Activated T-helper 2 cell treated with anti-CD3 and anti-CD28 coated beads, Interferon-gamma antibody, Interleukin-2, Interleukin-4, amounts not matched to agents 10 μg/mL and 5 μg/mL and 100 μg/mL, durations not matched to agents 14 hours and 24 hours and 36 hours (primary cell): ENCODE measurements at regions of chr1 and their contacts with region 1.

Region 1: DNA sequence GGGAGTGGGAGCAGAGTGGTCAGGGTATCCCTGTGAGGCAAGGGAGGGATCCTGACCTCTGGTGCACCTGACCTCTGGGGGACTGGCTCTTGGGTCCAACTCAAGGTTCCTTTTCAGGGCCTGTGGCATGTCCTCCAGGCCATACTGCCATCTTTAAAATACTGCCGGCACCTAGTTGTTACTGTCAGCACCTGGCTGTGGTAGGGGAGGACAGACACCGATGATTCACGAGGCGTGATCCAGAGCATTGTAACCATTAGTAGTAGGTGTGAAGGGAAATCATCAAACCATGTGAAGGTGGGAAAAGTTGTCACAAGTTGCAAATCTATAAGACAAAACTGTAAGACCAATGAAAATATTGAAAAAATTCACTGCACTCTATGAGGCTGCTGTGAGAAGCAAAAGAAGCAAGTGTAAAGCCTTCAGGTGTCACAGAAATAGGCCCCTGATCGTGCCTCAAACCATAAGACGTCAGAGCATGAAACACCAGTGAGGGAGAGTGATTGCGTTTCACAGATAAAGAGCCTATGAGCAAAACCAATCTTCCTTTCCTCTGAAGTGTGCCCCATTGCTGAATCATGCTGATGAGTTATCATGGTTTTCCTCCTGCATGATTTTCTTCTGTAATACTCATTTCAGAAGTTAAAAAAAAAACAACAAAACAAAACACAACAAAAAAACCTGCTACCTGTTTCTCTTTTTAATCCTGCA is 55.3 kb downstream of the CDC7 start:
- DNase-seq: peak; percentile 77
- H3K4me3 Mint-ChIP-seq: peak overlapping the region; percentile 53
- H3K27ac Mint-ChIP-seq: peak overlapping the region; percentile 93
- H3K4me1 Mint-ChIP-seq: peaks cover 86% of the 10 kb centered on the region
- H3K27me3 Mint-ChIP-seq: no peaks in the 10 kb centered on the region

Region 2: GRCh38 chr1:91591175-91591968 is 35.4 kb after region 1 on chr1:
- intact Hi-C with region 1: loop called (anchors 1 kb)
- DNase-seq: peak; percentile 16
- H3K4me3 Mint-ChIP-seq: peak overlapping the region; percentile 45
- H3K27ac Mint-ChIP-seq: peak overlapping the region; percentile 82
- H3K4me1 Mint-ChIP-seq: peaks cover 35% of the 10 kb centered on the region
- H3K27me3 Mint-ChIP-seq: no peaks in the 10 kb centered on the region

Region 3: DNA sequence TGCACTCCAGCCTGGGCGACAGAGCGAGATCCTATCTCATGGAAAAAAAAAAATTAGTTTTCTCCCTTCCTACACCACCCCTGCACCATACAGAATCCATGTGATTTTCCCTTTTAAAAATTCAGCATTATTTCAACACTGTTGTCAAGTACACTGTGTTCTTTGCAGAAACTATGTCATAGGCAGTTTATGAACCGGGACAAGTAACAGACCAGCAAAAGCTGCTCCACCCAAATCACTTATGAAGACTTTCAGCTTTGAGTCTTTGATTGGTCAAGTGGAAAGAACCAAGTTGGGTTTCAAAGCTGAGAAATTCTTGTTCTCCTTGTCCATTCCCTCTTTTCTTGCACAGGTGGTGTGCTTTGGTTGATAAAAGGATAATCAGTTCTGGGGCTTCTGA is 117.6 kb after region 1 on chr1:
- intact Hi-C with region 1: loop called (anchors 2 kb)
- DNase-seq: no peak
- H3K4me3 Mint-ChIP-seq: no peak overlapping the region
- H3K27ac Mint-ChIP-seq: peak overlapping the region; percentile 71
- H3K4me1 Mint-ChIP-seq: peaks cover 33% of the 10 kb centered on the region
- H3K27me3 Mint-ChIP-seq: no peaks in the 10 kb centered on the region

Region 4: DNA sequence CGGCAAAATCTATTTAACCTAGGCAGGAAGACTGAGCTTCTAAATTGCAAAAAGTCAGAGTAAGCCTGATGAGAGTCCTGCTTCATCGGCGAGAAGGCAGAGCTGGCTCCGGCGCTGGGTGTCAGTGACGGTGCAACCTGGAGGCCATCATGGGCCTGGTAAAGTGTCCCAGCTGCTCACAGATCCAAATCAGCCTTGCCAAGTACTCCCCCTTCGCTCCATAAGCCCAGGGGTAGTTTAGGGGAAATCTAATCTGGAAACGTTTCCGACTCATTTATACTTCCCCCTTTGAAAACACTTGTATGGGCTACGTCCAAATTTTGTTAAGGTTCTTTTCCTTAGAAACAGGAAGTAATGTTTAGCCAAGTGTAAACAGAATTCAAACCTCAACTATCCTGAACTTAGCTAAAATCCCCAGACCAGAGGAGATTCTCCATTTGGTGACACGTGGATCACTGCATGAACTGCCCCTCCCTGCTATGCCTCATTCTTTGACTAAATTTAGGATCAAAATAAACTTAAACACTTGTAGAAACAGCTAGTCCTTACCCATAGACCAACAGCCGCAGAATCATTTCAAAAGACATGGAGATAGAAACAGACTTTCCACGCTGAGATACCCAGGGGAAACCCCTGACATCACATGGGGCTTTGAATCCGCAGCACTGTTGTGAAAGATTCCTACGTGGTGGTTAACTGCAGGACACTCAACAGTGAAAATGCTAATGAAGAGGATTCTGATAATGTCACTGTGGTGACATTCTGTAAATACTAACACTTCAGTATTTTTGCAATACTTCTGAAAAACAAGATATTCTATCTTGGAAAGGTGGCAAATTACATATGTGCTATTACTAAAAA is 157.2 kb after region 1 on chr1:
- intact Hi-C with region 1: loop called (anchors 1 kb)
- DNase-seq: peak; percentile 26
- H3K4me3 Mint-ChIP-seq: peak overlapping the region; percentile 60
- H3K27ac Mint-ChIP-seq: peak overlapping the region; percentile 89
- H3K4me1 Mint-ChIP-seq: peaks cover 64% of the 10 kb centered on the region
- H3K27me3 Mint-ChIP-seq: no peaks in the 10 kb centered on the region